A549 (cell line): ENCODE measurements at regions of chr2 and their contacts with region 1.

Region 1: DNA sequence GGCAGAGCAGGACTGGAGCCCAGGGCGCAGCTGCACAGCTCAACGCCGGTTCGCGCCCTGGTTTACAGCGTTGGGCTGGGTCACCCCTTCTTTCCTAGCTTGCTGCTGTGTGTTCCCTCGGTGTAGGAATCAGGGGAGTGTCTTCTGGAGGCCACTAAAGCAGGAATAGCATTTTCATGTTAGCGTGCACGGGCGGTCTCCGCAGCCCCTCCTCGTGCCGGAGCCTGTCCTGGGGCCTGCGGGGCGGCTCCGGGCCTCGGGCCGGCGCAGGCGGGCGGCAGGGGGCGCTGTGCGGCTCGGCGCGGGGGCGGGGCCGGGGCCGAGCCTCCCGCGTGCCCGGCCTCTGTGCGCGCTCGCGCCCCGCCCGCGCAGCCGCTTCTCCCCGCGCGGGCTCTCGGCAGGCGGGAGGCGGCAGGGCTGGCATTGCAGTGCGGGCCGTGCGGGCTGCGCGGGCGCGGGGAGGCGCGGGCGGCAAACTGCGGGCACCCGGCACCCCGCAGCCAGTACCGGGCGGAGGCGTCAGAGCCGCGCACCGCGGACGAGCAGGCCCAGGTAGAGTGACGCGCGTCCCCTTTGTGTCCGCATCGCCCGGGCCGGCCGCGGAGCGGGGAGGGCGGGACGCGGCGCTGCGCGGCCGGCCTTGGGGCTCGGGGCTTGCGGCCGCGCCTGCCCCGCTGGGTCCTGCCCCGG is at the start of gene RNF144A:
- DNase-seq: peak; percentile 53 to 80
- ATAC-seq: peak; percentile 81 to 83
- H3K4me3 ChIP-seq: peak within 1 kb of the TSS; percentile 75
- H3K27ac ChIP-seq: peak within 1 kb of the TSS; percentile 78 to 93
- H3K4me1 ChIP-seq: peaks cover 9% of the 10 kb centered on the region; the same call in 1 of the 3 replicates
- CTCF ChIP-seq: peak; percentile 97
- EP300 ChIP-seq: no peak
- POLR2A ChIP-seq: peak; percentile 52
- RAD21 ChIP-seq: no peak; a peak in 1 of 5 replicates
- polyA plus RNA-seq, gene RNF144A: 9.1 and 9.6 TPM in 2 replicates

Region 2: DNA sequence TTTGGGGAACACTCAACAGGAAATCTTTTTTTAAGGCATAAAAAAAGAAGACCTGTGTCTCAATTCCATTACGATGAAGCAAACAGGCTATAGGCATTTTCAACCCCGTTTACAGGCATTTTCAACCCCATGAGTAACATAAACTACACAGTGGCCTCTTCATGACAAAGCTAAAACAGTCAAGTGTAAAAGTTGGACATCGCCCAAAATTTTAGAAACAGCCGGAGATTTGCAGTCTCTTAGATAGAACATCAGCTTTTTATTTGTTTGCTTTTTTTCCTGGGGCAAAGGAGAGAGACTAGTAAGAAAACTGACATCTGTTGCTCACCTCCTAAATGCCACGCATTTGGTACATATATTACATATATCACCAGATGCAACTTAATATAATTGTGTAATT is 225.2 kb before region 1 on chr2:
- CTCF ChIA-PET with region 1: no interaction called
- POLR2A ChIA-PET with region 1: no interaction called
- DNase-seq: no peak
- ATAC-seq: no peak
- H3K4me3 ChIP-seq: no peak overlapping the region
- H3K27ac ChIP-seq: no peak overlapping the region
- H3K4me1 ChIP-seq: no peaks in the 10 kb centered on the region
- CTCF ChIP-seq: no peak
- EP300 ChIP-seq: no peak
- POLR2A ChIP-seq: no peak
- RAD21 ChIP-seq: no peak

Region 3: DNA sequence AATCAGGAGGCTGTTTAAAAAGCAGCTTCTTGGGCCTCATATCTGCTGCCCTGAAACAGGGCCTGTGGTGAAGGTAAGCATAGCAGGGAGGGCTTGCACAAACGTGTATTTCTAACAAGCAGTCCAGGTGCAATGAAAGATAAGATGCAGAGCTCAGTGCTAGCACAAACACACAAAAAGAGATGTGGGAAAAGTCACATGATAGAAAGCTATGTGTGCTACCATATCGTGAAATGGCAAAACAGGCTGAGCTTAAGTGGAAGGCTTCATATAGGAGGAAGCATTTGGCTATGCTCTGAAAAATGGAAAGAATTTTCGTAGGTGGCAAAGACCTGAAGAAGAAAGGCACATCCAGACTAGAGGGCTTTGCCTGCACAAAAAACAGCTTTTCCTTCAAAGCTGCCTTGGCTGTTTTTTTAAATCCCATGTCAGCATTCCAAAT is 29.4 kb before region 1 on chr2:
- CTCF ChIA-PET with region 1: interaction called, 11 read pairs
- POLR2A ChIA-PET with region 1: no interaction called
- DNase-seq: no peak
- ATAC-seq: no peak
- H3K4me3 ChIP-seq: no peak overlapping the region
- H3K27ac ChIP-seq: no peak overlapping the region
- H3K4me1 ChIP-seq: no peaks in the 10 kb centered on the region
- CTCF ChIP-seq: no peak
- EP300 ChIP-seq: no peak
- POLR2A ChIP-seq: no peak
- RAD21 ChIP-seq: no peak

Region 4: GRCh38 chr2:6896930-6897759 is 20.1 kb before region 1 on chr2:
- CTCF ChIA-PET with region 1: interaction called, 26 read pairs
- POLR2A ChIA-PET with region 1: no interaction called
- DNase-seq: peak in 1 of 2 experiments; percentile 55
- ATAC-seq: peak in 1 of 2 experiments; percentile 68; a peak in 4 of 6 replicates
- H3K4me3 ChIP-seq: no peak overlapping the region
- H3K27ac ChIP-seq: no peak overlapping the region
- H3K4me1 ChIP-seq: no peaks in the 10 kb centered on the region
- CTCF ChIP-seq: peak; percentile 73
- EP300 ChIP-seq: no peak
- POLR2A ChIP-seq: no peak
- RAD21 ChIP-seq: peak; percentile 77 to 78; a peak in 4 of 5 replicates

Region 5: DNA sequence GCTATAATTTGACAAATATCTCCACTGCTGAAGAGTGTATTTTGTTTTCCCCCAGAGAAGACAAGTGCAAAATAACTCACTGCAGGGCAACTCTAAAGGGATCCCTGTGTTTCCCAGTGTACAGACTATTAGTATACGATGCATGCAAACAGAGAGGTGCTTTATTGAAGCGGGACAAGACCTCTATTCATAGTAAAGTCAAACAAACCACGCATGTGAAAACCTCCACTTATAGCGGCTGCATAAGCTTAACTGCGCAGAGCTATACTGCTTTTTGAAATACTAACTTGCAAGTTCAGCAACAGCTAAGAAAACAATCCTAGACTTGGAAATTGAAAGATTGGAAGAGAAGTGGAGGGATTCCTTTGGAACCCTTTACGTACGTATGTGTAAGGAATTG is 15.6 kb after region 1 on chr2:
- CTCF ChIA-PET with region 1: interaction called, 12 read pairs
- POLR2A ChIA-PET with region 1: no interaction called
- DNase-seq: no peak
- ATAC-seq: no peak
- H3K4me3 ChIP-seq: no peak overlapping the region
- H3K27ac ChIP-seq: no peak overlapping the region
- H3K4me1 ChIP-seq: no peaks in the 10 kb centered on the region
- CTCF ChIP-seq: no peak
- EP300 ChIP-seq: no peak
- POLR2A ChIP-seq: no peak
- RAD21 ChIP-seq: no peak